Activated CD4-positive, alpha-beta T cell treated with anti-CD3 and anti-CD28 coated beads for 36 hours (primary cell): ENCODE measurements at regions of chr5 and their contacts with region 1.

Region 1: DNA sequence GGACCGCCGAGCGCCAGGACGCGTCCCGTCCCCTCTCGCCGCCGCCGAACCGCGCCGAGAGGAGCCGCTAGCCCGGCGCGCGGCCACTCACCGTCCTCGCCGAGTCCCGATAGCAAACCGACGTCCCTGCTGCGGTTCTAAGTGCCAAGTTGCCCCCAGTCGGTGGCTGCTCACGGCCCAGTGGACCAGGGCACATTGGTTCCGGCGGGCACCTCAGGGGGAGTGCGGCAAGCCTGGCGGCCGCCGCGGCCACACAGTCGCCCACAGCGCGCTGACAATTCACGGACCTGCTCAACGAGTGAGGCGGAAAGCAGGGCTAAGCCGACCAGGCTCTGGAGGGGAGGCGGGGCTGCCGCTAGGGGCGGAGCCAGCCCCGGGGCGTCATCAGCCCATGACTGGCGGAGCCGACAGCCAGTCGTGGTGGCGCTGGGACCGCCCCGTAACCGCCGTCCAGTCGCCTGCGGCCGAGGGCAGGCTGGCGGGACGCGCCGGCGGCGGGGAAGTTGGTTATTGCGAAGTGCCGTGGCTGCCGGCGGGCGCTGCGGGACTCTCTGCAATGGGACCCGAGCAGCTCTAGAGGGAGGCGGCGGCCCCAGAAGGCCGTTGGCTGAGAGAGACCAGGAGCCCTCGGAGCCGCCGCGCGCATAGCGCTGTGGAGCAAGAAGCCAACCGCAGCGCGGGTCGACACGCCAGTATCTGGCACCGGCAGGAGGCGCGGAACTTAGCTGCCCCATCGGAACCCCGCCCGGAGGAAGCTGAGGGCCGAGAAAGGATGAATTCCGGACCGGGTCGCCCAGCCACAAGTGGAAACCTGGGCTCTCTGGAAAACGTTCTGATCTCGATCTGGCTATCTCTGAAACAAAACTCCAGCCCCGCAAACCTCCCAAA is at the start of gene MARCHF3:
- DNase-seq: peak; percentile 96
- ATAC-seq: peak; percentile 98
- H3K4me3 Mint-ChIP-seq: peak within 1 kb of the TSS; percentile 83
- H3K27ac Mint-ChIP-seq: peak within 1 kb of the TSS; percentile 78
- H3K4me1 Mint-ChIP-seq: peaks cover 16% of the 10 kb centered on the region
- H3K27me3 Mint-ChIP-seq: no peaks in the 10 kb centered on the region
- total RNA-seq, gene MARCHF3: 3.6 to 4.2 TPM

Region 2: GRCh38 chr5:126438267-126438666 is 592.2 kb before region 1 on chr5:
- CTCF ChIA-PET with region 1: no interaction called
- POLR2A ChIA-PET with region 1: no interaction called
- intact Hi-C with region 1: loop called in 1 of 2 experiments (anchors 10 kb)
- DNase-seq: peak; percentile 41
- ATAC-seq: peak; percentile 99
- H3K4me3 Mint-ChIP-seq: peak overlapping the region; percentile 9
- H3K27ac Mint-ChIP-seq: peak overlapping the region; percentile 89
- H3K4me1 Mint-ChIP-seq: peaks cover 34% of the 10 kb centered on the region
- H3K27me3 Mint-ChIP-seq: no peaks in the 10 kb centered on the region

Region 3: DNA sequence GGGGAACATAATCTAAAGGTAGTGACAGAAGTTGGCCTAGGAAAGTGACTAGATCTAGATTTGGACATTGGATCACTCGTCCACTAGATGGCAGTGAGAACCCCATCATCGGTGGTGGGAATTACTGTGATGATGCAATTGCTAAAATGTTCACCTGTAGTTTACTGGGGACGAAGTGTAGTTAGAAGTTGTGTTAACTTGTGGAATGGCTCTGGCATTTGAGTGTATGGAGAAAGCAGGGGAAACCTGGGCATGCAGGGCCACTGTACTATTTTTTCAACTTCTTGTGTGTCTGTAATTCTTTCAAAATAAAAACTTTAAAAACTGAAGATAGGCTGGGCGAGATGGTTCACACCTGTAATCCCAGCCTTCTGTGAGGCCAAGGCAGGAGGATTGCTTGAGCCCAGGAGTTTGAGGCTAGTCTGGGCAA is 354.3 kb before region 1 on chr5:
- CTCF ChIA-PET with region 1: no interaction called
- POLR2A ChIA-PET with region 1: no interaction called
- intact Hi-C with region 1: loop called in 1 of 2 experiments (anchors 5 kb)
- DNase-seq: peak; percentile 78
- ATAC-seq: peak; percentile 87
- H3K4me3 Mint-ChIP-seq: no peak overlapping the region
- H3K27ac Mint-ChIP-seq: peak overlapping the region; percentile 63
- H3K4me1 Mint-ChIP-seq: peaks cover 3% of the 10 kb centered on the region
- H3K27me3 Mint-ChIP-seq: no peaks in the 10 kb centered on the region

Region 4: DNA sequence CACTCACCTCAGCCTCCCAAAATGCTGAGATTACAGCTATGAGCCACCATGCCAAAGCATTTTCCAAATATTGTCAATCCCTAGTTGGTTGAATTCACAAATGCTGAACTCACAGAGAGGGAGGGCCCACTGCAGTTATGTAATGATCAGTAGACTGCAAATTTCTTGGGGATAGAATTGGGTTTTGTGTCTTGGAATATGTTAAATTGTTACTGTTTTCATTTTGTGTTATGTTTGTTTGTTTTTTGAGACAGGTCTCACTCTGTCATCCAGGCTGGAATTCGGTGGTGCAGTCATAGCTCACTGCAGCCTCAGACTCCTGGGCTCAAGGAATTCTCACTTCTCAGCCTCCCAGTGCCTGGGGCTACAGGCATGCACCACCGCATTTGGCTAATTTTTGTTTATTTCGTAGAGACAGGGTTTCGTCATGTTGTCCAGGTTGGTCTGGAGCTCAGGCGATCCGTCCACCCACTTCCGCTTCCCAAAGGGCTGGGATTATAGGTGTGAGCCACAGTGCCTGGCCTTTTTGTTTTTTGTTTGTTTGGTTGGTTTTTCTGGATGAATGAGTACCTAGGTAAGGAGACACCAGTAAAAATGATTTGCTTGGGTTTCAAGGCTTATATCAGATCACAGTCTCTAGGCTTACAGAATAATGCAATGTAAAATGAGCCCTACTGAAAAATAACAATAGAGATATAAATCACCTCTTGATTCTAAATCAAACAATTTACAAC is 285.1 kb before region 1 on chr5:
- CTCF ChIA-PET with region 1: no interaction called
- POLR2A ChIA-PET with region 1: no interaction called
- intact Hi-C with region 1: no loop called
- DNase-seq: no peak
- ATAC-seq: no peak
- H3K4me3 Mint-ChIP-seq: no peak overlapping the region
- H3K27ac Mint-ChIP-seq: no peak overlapping the region
- H3K4me1 Mint-ChIP-seq: peaks cover 34% of the 10 kb centered on the region
- H3K27me3 Mint-ChIP-seq: peaks cover 3% of the 10 kb centered on the region

Region 5: DNA sequence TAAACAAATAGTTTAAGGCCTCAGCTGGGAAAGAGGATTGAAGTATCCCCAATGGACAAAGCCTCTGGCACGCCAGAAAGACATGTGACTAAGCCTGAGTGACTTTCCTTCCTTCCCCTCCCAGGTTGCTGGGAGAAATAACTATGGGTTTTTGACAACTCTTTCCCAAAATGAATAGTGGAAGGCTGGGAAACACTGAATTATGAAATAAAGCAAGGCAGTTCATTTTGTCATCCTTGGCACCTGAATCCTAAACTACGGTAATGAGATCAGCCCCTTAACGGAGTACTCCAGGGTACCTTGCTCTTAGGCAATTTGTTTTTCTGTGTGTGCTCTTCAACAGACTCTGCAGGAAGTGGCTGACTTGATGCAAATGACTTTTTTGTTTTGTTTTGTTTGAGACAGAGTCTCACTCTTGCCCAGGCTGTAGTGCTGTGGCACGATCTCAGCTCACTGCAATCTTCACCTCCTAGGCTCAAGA is 178.4 kb before region 1 on chr5:
- CTCF ChIA-PET with region 1: no interaction called
- POLR2A ChIA-PET with region 1: no interaction called
- intact Hi-C with region 1: loop called in 1 of 2 experiments (anchors 2 kb)
- DNase-seq: no peak
- ATAC-seq: peak; percentile 71
- H3K4me3 Mint-ChIP-seq: peak overlapping the region; percentile 35
- H3K27ac Mint-ChIP-seq: peak overlapping the region; percentile 67
- H3K4me1 Mint-ChIP-seq: peaks cover 44% of the 10 kb centered on the region
- H3K27me3 Mint-ChIP-seq: no peaks in the 10 kb centered on the region

Region 6: GRCh38 chr5:127072861-127073846 is 42.7 kb after region 1 on chr5 and contains the start of gene C5orf63:
- CTCF ChIA-PET with region 1: interaction called, 4 read pairs
- POLR2A ChIA-PET with region 1: interaction called, 4 read pairs
- intact Hi-C with region 1: loop called (anchors 1 kb)
- DNase-seq: peak; percentile 87
- ATAC-seq: peak; percentile 98
- H3K4me3 Mint-ChIP-seq: peak within 1 kb of the TSS; percentile 86
- H3K27ac Mint-ChIP-seq: peak within 1 kb of the TSS; percentile 97
- H3K4me1 Mint-ChIP-seq: peaks cover 9% of the 10 kb centered on the region
- H3K27me3 Mint-ChIP-seq: no peaks in the 10 kb centered on the region
- total RNA-seq, gene C5orf63: 12.0 to 14.2 TPM

Region 7: GRCh38 chr5:128083033-128083810 is 1052.7 kb after region 1 on chr5 and contains the start of gene SLC12A2:
- CTCF ChIA-PET with region 1: no interaction called
- POLR2A ChIA-PET with region 1: no interaction called
- intact Hi-C with region 1: loop called in 1 of 2 experiments (anchors 5 kb)
- DNase-seq: peak; percentile 94
- ATAC-seq: peak; percentile 68
- H3K4me3 Mint-ChIP-seq: peak within 1 kb of the TSS; percentile 91
- H3K27ac Mint-ChIP-seq: peak within 1 kb of the TSS; percentile 94
- H3K4me1 Mint-ChIP-seq: peaks cover 50% of the 10 kb centered on the region
- H3K27me3 Mint-ChIP-seq: no peaks in the 10 kb centered on the region
- total RNA-seq, gene SLC12A2: 8.0 to 13.1 TPM